Motor neuron (in vitro differentiated cells): ENCODE measurements at regions of chr12 and their contacts with region 1.

Region 1: GRCh38 chr12:7450665-7451064 is 6.7 kb upstream of the CD163L1 start:
- ATAC-seq: no peak
- H3K4me3 ChIP-seq: no peak overlapping the region
- H3K27ac ChIP-seq: no peak overlapping the region
- H3K4me1 ChIP-seq: no peaks in the 10 kb centered on the region

Region 2: GRCh38 chr12:7374423-7375144 is 76.1 kb before region 1 on chr12:
- in situ Hi-C with region 1: loop called in 1 of 9 experiments (anchors 10 kb)
- ATAC-seq: peak in 3 of 8 experiments; percentile 64 to 74 (median 68)
- H3K4me3 ChIP-seq: no peak overlapping the region
- H3K27ac ChIP-seq: no peak overlapping the region
- H3K4me1 ChIP-seq: peaks cover 3% of the 10 kb centered on the region in 2 donors